Tibial artery (tissue), 4 donors: ENCODE measurements at regions of chr20 and their contacts with region 1.

Region 1: DNA sequence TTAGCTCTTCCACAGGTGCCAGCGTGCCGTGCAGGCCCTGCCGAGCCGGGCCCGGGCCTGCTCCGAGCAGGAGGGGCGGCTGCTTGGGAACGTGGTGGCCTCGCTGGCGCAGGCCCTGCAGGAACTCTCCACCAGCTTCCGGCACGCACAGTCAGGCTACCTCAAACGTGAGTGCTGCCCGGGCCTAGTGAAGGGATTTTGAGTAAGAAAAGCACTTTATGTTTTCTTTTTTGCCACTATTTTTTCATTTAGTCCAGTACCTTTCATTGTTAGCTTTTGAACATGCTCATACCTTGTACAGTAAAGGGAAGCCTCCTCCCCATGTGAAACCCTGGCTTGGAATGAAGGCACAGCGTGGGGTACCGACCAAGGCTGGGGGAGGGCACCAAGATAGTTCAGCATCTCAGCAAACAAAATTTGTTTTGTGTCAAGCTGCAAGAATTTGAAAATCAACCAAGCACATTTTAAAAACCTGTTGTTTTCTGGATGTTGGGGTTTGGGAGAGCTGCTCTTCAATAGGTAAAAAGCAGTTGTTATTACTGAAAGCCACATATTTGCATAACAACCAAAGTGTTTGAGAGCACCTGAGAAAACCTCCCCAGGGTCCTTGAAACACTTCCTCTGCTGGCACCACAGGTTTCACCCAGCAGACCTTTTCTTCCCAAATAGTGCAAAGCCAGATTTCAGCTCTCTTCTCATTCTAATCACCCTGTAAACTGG is 18.4 kb downstream of the STX16 start:
- DNase-seq: no peak
- H3K4me3 ChIP-seq: no peak overlapping the region
- H3K27ac ChIP-seq: no peak overlapping the region
- H3K4me1 ChIP-seq: no peaks in the 10 kb centered on the region
- H3K27me3 ChIP-seq: no peaks in the 10 kb centered on the region
- CTCF ChIP-seq: no peak

Region 2: GRCh38 chr20:58481481-58482021 is 187.9 kb before region 1 on chr20:
- intact Hi-C with region 1: no loop called
- DNase-seq: no peak
- H3K4me3 ChIP-seq: no peak overlapping the region
- H3K27ac ChIP-seq: no peak overlapping the region
- H3K4me1 ChIP-seq: no peaks in the 10 kb centered on the region
- H3K27me3 ChIP-seq: no peaks in the 10 kb centered on the region
- CTCF ChIP-seq: peak; percentile 32 to 40

Region 3: DNA sequence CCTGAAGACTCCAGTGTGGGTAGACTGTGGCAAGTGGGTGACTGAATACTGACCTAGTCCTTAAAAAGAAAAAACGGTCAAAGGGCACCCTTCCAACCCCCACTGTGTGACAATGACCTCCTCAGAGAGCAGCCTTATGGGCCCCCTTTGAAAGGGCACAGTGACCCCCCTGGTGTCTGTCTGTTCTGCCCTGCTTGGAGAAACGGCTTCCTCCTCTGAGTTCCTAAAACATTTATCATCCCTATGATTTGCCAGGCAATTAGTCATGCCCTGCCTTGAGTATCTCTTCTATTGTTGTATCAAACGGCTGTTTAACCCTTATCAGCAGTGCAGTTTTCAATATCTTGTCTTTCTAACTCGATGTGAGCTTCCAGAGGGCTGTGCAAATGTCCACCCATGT is 39.4 kb before region 1 on chr20:
- intact Hi-C with region 1: loop called (anchors 2 kb)
- DNase-seq: no peak
- H3K4me3 ChIP-seq: no peak overlapping the region
- H3K27ac ChIP-seq: no peak overlapping the region
- H3K4me1 ChIP-seq: peaks cover 0 to 8% (median 5%) of the 10 kb centered on the region in 4 donors
- H3K27me3 ChIP-seq: no peaks in the 10 kb centered on the region
- CTCF ChIP-seq: no peak

Region 4: GRCh38 chr20:58640446-58640845 is 29.0 kb before region 1 on chr20:
- intact Hi-C with region 1: no loop called
- DNase-seq: peak in 1 of 2 donors; percentile 4
- H3K4me3 ChIP-seq: no peak overlapping the region
- H3K27ac ChIP-seq: no peak overlapping the region
- H3K4me1 ChIP-seq: no peaks in the 10 kb centered on the region
- H3K27me3 ChIP-seq: peaks cover 0 to 3% of the 10 kb centered on the region in 2 donors
- CTCF ChIP-seq: no peak

Region 5: GRCh38 chr20:58727292-58727691 is 57.8 kb after region 1 on chr20:
- intact Hi-C with region 1: no loop called
- DNase-seq: no peak
- H3K4me3 ChIP-seq: no peak overlapping the region
- H3K27ac ChIP-seq: no peak overlapping the region
- H3K4me1 ChIP-seq: no peaks in the 10 kb centered on the region
- H3K27me3 ChIP-seq: peaks cover 0 to 12% of the 10 kb centered on the region in 2 donors
- CTCF ChIP-seq: no peak